ENCODE measurements at regions of chr3 and their contacts with region 1.

Region 1: DNA sequence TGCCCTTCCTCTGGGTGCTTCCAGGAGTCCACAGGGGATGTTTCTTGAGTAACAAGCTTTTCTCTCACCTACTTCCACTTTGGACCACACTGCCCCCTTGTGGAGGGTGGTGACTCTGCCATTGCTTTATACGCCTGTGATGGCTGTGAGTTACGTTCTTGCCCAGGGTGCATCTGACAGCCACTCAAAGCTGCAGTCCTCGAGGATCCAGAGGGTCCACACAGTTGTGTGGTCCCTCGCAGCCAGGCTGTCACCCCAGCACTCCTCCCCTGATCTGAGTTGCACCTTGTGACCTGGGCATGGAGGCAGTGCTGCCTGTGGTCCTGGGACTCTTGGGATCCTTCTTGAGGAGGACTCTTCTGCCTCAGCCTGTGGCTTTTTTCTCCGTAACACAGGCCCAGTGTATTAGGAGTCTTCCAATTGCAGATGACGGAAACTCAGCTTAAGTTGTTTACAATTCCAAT is 23.4 kb downstream of the FOXL2 start:
- DNase-seq: peak; percentile 72
- H3K4me3 ChIP-seq: peak overlapping the region in 1 of 2 experiments; percentile 34; a peak in 1 of 4 replicates
- H3K27ac ChIP-seq: no peak overlapping the region
- H3K4me1 ChIP-seq: peaks cover 2 to 11% of the 10 kb centered on the region in 2 experiments; a peak in 2 of 4 replicates
- H3K27me3 ChIP-seq: no peaks in the 10 kb centered on the region; the same call in 1 of the 2 replicates
- CTCF ChIP-seq: peak; percentile 83
- EP300 ChIP-seq: no peak
- RAD21 ChIP-seq: peak; percentile 73

Region 2: DNA sequence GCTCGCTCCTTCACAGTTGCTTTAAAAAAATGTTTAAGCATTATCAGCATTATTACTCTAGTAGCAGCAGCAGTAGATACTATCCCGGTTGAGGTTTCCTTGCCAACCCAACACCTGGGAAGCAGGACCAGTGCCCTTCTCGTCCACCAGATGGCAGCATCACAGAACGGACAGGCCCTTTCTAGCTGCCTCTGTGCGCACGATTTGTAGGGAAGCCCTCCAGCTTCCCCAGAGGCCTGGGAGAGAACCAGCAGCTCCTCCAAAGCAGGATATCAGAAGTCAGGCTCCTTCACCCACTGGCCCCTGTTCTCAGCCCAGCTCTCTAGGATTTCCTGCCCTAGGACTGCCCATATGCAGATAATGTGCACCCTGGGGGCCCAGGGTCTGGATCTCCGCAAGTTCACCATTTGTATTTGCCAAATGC is 506.0 kb before region 1 on chr3:
- CTCF ChIA-PET with region 1: interaction called, 28 read pairs
- POLR2A ChIA-PET with region 1: no interaction called
- DNase-seq: peak; percentile 80
- H3K4me3 ChIP-seq: peak overlapping the region in 1 of 2 experiments; percentile 17; a peak in 1 of 4 replicates
- H3K27ac ChIP-seq: no peak overlapping the region
- H3K4me1 ChIP-seq: no peaks in the 10 kb centered on the region; a peak in 2 of 4 replicates
- H3K27me3 ChIP-seq: no peaks in the 10 kb centered on the region
- CTCF ChIP-seq: peak; percentile 93
- EP300 ChIP-seq: no peak
- RAD21 ChIP-seq: peak; percentile 78

Region 3: DNA sequence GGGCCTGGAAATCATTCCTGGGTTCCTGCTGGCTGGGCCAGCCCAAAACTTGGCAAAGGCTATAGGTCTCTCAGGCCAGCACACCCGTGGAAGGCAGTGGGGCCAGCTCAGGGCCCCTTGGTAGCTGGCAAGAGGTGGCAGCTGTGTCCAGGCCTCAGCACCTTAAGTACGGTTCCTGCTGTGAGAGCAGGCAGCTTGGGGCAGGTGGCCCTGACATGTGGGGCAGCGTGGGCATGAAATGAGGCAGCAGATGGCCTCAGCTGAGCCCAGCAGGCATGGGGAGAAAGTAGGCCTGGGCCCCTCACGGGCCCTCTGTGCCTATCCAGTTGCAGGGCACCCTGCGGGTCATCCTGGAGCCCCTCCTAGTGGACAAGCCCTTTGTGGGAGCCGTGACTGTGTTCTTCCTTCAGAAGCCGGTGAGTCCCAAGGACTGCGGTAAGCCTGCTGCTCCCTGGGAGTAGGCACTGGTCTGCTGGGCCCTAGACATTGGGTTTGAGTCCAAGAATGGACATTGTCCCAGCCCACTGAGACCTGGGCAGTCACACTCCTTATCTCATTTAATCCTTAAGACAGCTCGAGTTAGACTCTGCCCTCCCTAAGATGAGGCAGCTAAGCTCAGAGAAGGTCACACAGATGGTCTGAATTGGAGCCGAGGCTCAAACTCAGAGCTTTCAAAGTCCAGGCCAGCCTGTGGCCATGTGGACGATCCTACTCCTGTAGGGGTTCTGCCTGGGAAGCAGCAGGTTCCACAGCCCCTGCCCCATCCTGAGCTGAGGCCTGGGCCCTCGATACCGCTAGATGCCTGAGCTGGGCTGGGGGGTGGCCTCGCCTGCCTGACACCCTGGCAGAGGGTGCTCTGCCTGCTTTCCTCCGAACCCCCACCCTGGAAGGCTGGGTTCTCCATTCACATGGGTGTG is 463.7 kb before region 1 on chr3:
- CTCF ChIA-PET with region 1: interaction called, 10 read pairs
- POLR2A ChIA-PET with region 1: no interaction called
- DNase-seq: no peak
- H3K4me3 ChIP-seq: no peak overlapping the region
- H3K27ac ChIP-seq: no peak overlapping the region
- H3K4me1 ChIP-seq: no peaks in the 10 kb centered on the region
- H3K27me3 ChIP-seq: no peaks in the 10 kb centered on the region
- CTCF ChIP-seq: no peak
- EP300 ChIP-seq: no peak
- RAD21 ChIP-seq: no peak

Region 4: GRCh38 chr3:138479438-138479863 is 444.1 kb before region 1 on chr3:
- CTCF ChIA-PET with region 1: interaction called, 81 read pairs
- POLR2A ChIA-PET with region 1: interaction called, 3 read pairs
- DNase-seq: peak; percentile 69
- H3K4me3 ChIP-seq: no peak overlapping the region; a peak in 1 of 4 replicates
- H3K27ac ChIP-seq: no peak overlapping the region
- H3K4me1 ChIP-seq: no peaks in the 10 kb centered on the region
- H3K27me3 ChIP-seq: no peaks in the 10 kb centered on the region
- CTCF ChIP-seq: peak; percentile 87
- EP300 ChIP-seq: no peak
- RAD21 ChIP-seq: peak; percentile 78

Region 5: GRCh38 chr3:138809500-138810256 is 113.9 kb before region 1 on chr3:
- CTCF ChIA-PET with region 1: no interaction called
- POLR2A ChIA-PET with region 1: no interaction called
- DNase-seq: no peak
- H3K4me3 ChIP-seq: no peak overlapping the region
- H3K27ac ChIP-seq: no peak overlapping the region
- H3K4me1 ChIP-seq: no peaks in the 10 kb centered on the region
- H3K27me3 ChIP-seq: no peaks in the 10 kb centered on the region
- CTCF ChIP-seq: no peak
- EP300 ChIP-seq: no peak
- RAD21 ChIP-seq: no peak

Region 6: GRCh38 chr3:138941259-138941885 is 17.8 kb after region 1 on chr3:
- CTCF ChIA-PET with region 1: interaction called, 43 read pairs
- POLR2A ChIA-PET with region 1: no interaction called
- DNase-seq: peak; percentile 74
- H3K4me3 ChIP-seq: no peak overlapping the region; a peak in 1 of 4 replicates
- H3K27ac ChIP-seq: no peak overlapping the region
- H3K4me1 ChIP-seq: peaks cover 0 to 6% of the 10 kb centered on the region in 2 experiments; a peak in 2 of 4 replicates
- H3K27me3 ChIP-seq: peaks cover 97% of the 10 kb centered on the region
- CTCF ChIP-seq: peak; percentile 59
- EP300 ChIP-seq: no peak
- RAD21 ChIP-seq: peak; percentile 27; the same call in 1 of the 2 replicates

Region 7: DNA sequence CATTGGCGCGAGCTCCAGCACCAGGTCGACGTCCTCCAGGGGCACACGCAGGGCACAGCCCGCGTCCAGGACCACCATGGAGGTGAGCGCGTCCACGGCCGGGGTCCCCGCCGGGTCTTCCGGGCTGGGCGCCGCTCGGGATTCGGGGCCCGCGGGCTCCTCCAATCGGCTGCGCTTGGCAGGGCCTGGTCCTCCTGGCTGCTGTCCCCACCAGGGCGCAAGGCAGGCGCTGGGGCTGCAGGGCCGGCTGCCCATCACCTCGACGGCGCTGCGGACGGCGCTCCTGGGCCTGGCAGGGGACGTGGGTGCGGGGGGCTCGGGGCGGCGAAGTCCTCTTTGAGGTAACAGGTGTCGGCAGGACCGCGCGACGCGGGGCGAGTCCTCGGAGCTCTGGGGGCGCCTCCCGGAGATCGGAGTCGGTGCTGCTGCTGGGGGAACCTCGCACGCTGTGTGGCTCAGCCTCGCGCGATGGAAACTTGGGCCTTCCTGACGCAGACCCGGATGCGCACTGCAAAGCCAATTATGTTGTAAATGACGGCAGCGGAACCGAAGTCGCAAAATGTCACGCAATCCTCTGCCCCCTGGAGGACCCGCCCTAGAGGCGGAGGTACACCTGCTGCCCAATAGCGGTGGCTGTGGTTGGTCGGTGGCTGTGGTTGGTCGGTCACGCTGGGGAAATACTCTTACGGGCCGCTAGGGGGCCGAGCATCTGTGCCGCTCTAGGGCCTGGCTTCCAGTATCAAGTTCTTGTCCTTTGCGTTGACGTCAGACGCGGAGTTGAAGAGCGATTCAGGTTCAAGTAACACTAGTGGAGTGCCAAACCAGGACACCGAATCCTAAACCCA is 121.0 kb after region 1 on chr3 and contains the start of gene PRR23C:
- CTCF ChIA-PET with region 1: no interaction called
- POLR2A ChIA-PET with region 1: no interaction called
- DNase-seq: peak; percentile 39
- H3K4me3 ChIP-seq: no peak within 1 kb of the TSS
- H3K27ac ChIP-seq: no peak within 1 kb of the TSS
- H3K4me1 ChIP-seq: no peaks in the 10 kb centered on the region
- H3K27me3 ChIP-seq: no peaks in the 10 kb centered on the region
- CTCF ChIP-seq: peak; percentile 23; the same call in 1 of the 2 replicates
- EP300 ChIP-seq: no peak
- RAD21 ChIP-seq: no peak
- polyA plus RNA-seq, gene PRR23C: not detected in 2 replicates